Right ventricle myocardium superior (tissue), 1 donor: ENCODE measurements at regions of chr3 and their contacts with region 1.

Region 1: GRCh38 chr3:193788189-193788991 is 195.4 kb downstream of the OPA1 start:
- DNase-seq: peak; percentile 66
- ATAC-seq: peak; percentile 94

Region 2: GRCh38 chr3:193971261-193971751 is 182.9 kb after region 1 on chr3:
- intact Hi-C with region 1: loop called (anchors 10 kb)
- DNase-seq: no peak
- ATAC-seq: peak; percentile 36

Region 3: DNA sequence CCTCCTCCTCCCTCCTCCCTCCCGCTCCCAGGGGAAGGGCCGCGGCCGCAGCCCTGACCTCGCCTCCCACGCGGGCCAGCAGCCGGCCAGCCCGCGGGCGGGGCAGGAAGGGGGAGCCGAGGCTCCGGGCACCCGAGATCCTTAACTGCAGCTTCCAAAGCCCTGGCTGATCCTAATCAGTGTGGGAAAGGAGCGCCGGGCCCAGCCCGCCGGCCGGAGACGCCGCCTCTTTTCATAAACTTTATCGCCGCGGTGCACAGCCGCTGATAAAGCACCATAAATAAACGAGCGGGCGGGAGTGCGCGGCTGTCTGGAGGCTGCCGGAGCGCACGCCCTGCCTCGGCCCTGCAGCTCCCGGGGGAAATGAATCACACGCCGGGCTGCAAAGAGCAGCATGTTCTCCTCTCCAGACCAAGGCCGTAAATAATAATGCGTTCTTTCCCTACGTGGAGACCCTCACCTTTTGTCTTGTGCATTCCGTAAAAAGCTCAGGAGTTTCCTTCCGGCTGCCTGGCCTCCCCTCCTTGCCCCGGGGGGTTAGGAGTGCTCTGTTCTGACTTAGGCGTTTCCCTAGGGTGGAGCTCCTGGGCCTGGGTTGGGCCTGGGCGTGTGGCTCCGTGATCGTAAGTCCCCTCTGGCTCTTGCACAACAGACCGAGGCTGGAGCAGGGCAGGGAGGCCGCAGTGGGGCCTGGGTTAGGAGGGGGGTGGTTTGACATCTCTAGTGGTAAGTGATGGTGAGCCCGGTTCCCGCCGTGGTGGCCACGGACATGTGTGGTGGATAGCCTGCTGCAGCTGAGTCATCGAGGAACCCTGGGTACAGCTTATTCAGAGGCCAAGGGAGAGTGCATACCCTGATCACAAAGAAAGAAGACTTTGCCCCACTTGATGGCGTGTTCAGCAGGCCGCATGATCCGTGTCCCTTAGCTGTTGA is 215.0 kb after region 1 on chr3:
- intact Hi-C with region 1: loop called (anchors 10 kb)
- DNase-seq: peak; percentile 93
- ATAC-seq: peak; percentile 93

Region 4: DNA sequence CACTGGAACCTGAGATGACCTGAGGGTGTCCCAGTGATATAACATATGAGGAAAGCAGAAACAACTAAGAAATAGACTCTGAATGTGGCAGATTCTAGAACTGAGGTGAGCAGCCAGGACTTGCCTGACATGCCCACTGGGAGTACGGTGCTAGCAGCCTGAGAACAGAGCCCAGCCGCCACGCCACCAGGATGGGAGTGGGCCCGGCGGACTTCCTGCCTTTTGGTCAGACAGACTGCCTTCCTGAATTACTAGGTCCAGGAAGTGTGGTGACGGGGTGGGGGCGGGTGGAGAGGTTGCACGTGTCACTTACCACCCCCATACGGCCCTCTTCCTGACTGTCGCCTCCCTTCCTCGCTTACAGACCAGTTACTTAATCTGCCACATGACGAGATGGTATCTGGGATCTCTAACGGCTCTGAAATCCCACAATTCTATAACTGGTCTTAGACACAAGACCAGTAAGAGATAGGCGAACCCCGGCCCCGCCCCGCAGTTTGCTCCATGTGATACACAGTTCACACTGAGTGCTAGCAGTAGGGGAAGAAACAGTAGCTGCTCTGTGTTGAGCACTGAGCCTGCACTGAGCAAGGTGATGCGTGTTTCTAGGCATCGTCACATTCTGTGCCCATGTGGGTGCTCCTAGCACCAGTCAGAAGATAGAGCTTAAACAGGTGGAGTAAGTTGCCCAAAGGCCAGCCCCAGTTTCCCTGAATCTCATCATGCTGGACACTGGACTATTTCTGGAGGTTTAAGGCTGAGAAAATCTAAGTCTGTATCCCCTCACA is 467.1 kb after region 1 on chr3:
- intact Hi-C with region 1: no loop called
- DNase-seq: peak; percentile 88
- ATAC-seq: peak; percentile 67

Region 5: DNA sequence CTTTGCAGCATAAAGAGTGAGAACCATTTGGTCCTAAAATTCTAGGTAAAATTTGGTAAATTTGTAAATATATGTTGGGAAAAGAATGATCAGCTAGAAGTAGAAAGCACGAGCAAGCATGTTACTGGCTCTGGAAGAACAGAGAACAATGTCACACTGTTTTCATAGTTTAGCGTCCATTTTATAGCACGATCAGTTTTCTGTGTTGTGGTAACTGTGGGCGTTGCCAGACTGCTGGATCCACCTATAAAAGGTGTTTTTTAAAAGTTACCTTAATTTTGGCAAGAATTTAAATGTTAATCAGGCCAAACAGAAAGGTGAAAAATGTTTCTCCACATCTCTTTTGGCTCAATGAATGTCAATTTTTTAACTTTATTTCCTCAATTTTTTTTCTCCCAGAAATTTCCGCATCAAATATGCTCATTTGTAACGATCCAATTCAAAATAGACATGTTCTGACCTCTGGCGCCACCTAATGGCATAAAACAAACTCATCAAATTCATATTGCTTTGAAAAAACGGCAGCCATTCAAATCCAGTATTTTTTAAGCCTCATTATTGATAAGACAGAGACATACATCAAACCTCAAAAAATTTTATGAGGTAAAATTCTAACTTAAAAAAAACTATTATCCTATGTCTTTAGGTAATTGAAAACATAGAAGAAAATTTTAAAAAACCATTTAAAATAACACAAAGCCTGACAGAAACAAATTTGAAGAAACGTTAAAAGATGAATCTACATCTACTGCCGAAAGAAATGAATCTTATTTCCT is 616.2 kb after region 1 on chr3:
- intact Hi-C with region 1: loop called (anchors 10 kb)
- DNase-seq: no peak
- ATAC-seq: no peak